Pancreas (tissue), 10 donors: ENCODE measurements at regions of chr1 and their contacts with region 1.

Region 1: DNA sequence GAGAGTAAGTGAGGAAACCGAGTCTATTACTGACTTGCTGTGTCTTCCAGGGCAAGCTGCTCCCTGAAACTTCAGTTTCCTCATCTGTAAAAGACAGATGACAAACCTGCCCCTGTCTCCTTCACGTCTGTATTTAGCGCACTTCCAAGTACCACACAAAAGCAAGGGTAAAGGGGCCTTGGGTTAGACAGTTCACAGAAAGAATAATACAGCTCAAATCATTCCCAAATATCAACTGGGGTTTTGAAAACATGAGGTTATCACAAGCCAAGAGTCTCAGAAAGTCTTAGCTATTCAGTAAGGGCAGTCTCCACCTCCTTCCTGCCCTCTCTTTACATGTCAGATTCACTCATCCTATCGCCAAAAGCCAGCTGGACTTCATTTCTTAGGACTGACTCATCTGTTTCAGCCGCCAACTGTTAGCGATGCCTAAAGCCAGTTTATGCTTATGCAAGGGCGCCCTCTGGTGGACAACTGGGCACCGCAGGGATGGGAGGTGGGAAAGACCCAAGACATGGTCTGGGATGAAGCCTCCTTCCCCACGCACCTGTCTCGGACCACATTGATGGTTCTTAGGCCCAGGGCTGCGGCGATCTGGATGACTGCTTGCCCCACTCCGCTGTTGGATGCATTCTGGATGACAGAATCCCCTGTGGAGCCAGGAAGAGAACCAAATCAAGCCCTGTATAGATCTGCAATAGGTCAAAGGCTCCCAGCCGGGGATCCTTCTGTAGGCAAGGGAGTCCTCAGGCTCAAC is 21.1 kb upstream of the SRSF4 start:
- DNase-seq: peak; percentile 88 to 100 (median 96)
- ATAC-seq: peak; percentile 96 to 99 (median 98)
- H3K4me3 ChIP-seq: no peak overlapping the region
- H3K27ac ChIP-seq: peak overlapping the region in 2 of 4 donors; percentile 39 to 42
- H3K4me1 ChIP-seq: peaks cover 0 to 9% (median 4%) of the 10 kb centered on the region in 3 donors
- H3K27me3 ChIP-seq: no peaks in the 10 kb centered on the region
- CTCF ChIP-seq: peak; percentile 95 to 99 (median 97)

Region 2: DNA sequence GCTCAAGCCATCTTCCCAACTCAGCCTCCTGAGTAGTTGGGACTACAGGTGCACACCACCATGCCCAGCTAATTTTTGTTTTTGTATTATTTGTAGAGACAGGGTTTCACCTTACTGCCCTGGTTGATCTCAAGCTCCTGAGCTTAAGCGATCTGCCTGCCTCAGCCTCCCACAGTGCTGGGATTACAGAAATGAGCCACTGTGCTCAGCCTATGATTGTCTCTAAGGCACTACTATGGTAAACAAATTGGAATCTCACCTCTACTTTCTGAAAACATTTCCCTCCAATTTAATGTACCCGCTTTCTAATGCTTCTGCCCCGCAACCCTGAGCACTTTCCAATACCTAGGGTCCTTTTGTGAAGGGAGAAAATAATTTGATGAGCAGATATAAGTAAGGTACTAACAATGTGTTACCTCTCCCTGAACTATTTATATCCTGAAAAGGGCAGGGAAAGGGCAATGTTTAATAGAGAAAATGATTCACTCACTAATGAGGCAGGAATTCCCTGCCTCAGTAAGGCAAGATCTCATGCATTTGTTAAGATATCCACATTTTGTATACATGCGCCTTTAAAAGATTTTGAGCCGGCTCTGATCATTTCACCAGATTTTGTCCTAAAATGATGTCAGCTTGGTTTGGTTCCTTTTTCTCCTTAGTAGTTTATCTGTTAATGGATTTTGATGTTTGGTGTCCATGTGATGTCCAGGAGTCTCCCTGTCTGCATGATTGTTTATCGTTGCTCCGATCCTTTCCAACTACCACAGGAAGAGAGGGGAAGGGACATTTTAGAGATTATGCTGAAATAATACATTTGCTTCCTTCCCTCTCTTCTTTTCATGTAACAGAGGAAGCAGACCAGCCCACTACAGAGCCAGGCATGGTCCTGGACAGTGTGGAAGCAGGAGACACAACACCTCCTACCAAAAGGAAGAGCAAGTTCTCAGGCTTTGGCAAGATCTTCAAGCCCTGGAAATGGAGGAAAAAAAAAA is 744.2 kb before region 1 on chr1:
- intact Hi-C with region 1: no loop called
- DNase-seq: no peak
- ATAC-seq: no peak
- H3K4me3 ChIP-seq: no peak overlapping the region
- H3K27ac ChIP-seq: no peak overlapping the region
- H3K4me1 ChIP-seq: no peaks in the 10 kb centered on the region
- H3K27me3 ChIP-seq: no peaks in the 10 kb centered on the region
- CTCF ChIP-seq: no peak

Region 3: GRCh38 chr1:28663871-28664470 is 538.8 kb before region 1 on chr1:
- intact Hi-C with region 1: no loop called
- DNase-seq: no peak
- ATAC-seq: no peak
- H3K4me3 ChIP-seq: no peak overlapping the region
- H3K27ac ChIP-seq: no peak overlapping the region
- H3K4me1 ChIP-seq: peaks cover 0 to 7% (median 5%) of the 10 kb centered on the region in 3 donors
- H3K27me3 ChIP-seq: no peaks in the 10 kb centered on the region
- CTCF ChIP-seq: no peak

Region 4: DNA sequence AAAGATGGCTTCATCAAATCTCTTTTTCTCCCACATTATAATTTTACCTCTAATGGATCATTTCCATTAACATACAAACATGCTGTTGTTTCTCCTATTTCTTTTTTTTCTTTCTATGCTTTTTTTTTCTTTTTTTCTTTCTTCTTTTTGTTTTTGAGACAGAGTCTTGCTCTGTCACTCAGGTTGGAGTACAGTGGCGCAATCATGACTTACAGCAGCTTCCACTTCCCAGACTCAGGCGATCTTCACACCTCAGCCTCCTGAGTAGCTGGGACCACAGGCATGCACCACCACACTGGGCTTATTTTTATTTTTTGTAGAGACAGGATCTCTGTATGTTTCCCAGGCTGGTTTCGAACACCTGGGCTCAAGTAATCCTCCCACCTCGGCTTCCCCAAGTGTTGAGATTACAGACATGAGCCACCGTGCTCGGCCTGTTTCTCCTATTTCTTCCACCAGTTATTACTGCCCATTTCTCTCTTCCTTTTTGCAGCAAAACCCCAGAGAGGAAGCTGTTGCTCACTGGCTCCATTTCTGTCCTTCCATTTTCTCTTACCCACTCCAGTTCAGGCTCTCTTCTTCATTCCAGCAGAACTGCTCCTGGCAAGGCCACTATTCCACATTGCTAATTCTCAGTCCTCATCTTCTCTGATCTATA is 422.9 kb before region 1 on chr1:
- intact Hi-C with region 1: loop called in 1 of 3 experiments (anchors 10 kb)
- DNase-seq: no peak
- ATAC-seq: no peak
- H3K4me3 ChIP-seq: no peak overlapping the region
- H3K27ac ChIP-seq: no peak overlapping the region
- H3K4me1 ChIP-seq: peaks cover 0 to under 1% (median 0%) of the 10 kb centered on the region in 3 donors
- H3K27me3 ChIP-seq: no peaks in the 10 kb centered on the region
- CTCF ChIP-seq: no peak